Sigmoid colon (tissue), 7 donors: ENCODE measurements at regions of chr7 and their contacts with region 1.

Region 1: DNA sequence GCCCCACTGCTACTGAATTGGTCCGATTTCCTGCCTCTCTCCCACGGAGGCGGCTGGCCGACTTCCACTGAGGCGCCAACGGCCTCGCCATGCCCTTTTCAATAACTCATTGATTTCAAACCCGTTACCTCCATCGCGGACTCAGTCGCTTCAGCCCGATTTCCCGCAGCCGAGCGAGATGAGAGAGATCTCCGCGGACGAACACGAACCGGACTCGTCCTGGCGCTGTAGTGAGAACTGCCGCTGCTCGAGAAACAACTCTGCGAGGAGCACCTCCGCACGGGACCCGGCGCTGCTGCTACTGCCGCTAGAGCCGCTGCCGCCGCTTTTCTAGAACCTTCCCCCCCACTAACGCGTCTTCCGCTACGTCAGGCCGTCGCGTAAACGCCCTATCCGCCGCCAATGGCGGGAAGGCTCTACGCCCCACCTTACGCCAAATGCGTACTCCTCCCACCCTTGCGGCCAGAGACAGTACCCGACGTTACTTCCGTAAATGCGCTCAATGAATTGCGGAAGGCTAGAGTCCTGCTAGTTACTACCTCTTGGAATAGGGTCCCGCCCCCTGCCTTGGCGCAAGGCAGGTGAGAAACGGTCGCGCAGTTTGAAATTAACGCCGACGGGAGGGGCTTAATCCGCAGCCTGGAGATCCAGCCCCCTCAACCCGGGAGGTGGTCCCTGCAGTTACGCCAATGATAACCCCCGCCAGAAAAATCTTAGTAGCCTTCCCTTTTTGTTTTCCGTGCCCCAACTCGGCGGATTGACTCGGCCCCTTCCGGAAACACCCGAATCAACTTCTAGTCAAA is at the start of gene HNRNPA2B1:
- DNase-seq: peak; percentile 99
- H3K4me3 ChIP-seq: peak within 1 kb of the TSS; percentile 83 to 98 (median 94)
- H3K27ac ChIP-seq: peak within 1 kb of the TSS; percentile 97 to 99 (median 98)
- H3K4me1 ChIP-seq: peaks cover 0 to 55% (median 49%) of the 10 kb centered on the region in 4 donors
- H3K27me3 ChIP-seq: no peaks in the 10 kb centered on the region
- CTCF ChIP-seq: peak in 2 of 4 experiments; percentile 4 to 16
- EP300 ChIP-seq: no peak
- POLR2A ChIP-seq: peak; percentile 100
- total RNA-seq, gene HNRNPA2B1: 141 to 208 (median 181) TPM

Region 2: GRCh38 chr7:26078437-26079336 is 122.0 kb before region 1 on chr7:
- intact Hi-C with region 1: loop called (anchors 5 kb)
- DNase-seq: peak; percentile 76
- H3K4me3 ChIP-seq: peak overlapping the region in 1 of 4 donors; percentile 0
- H3K27ac ChIP-seq: no peak overlapping the region
- H3K4me1 ChIP-seq: peaks cover 0 to 17% (median 13%) of the 10 kb centered on the region in 4 donors
- H3K27me3 ChIP-seq: peaks cover 0 to 71% (median 23%) of the 10 kb centered on the region in 3 donors
- CTCF ChIP-seq: peak in 1 of 4 experiments; percentile 13
- EP300 ChIP-seq: peak in 1 of 4 donors; percentile 11
- POLR2A ChIP-seq: no peak

Region 3: GRCh38 chr7:26365077-26365900 is 164.6 kb after region 1 on chr7:
- intact Hi-C with region 1: loop called (anchors 2 kb)
- DNase-seq: no peak
- H3K4me3 ChIP-seq: no peak overlapping the region
- H3K27ac ChIP-seq: no peak overlapping the region
- H3K4me1 ChIP-seq: peaks cover 0 to 8% (median 0%) of the 10 kb centered on the region in 4 donors
- H3K27me3 ChIP-seq: peaks cover 5 to 47% (median 14%) of the 10 kb centered on the region in 3 donors
- CTCF ChIP-seq: peak; percentile 62 to 79 (median 69)
- EP300 ChIP-seq: no peak
- POLR2A ChIP-seq: no peak

Region 4: GRCh38 chr7:26864309-26865093 is 663.9 kb after region 1 on chr7 and contains the start of gene SKAP2:
- intact Hi-C with region 1: loop called (anchors 2 kb)
- DNase-seq: peak; percentile 100
- H3K4me3 ChIP-seq: peak within 1 kb of the TSS; percentile 72 to 91 (median 82)
- H3K27ac ChIP-seq: peak within 1 kb of the TSS; percentile 89 to 98 (median 94)
- H3K4me1 ChIP-seq: no peaks in the 10 kb centered on the region
- H3K27me3 ChIP-seq: no peaks in the 10 kb centered on the region
- CTCF ChIP-seq: no peak
- EP300 ChIP-seq: peak in 1 of 4 donors; percentile 67
- POLR2A ChIP-seq: peak; percentile 91 to 92
- total RNA-seq, gene SKAP2: 13.0 to 19.3 (median 16.8) TPM

Region 5: GRCh38 chr7:27160546-27161213 is 960.0 kb after region 1 on chr7:
- intact Hi-C with region 1: loop called (anchors 2 kb)
- DNase-seq: peak; percentile 94
- H3K4me3 ChIP-seq: peak overlapping the region; percentile 38 to 85 (median 82)
- H3K27ac ChIP-seq: peak overlapping the region in 3 of 4 donors; percentile 97 to 98 (median 98)
- H3K4me1 ChIP-seq: peaks cover 0 to 44% (median 40%) of the 10 kb centered on the region in 4 donors
- H3K27me3 ChIP-seq: no peaks in the 10 kb centered on the region
- CTCF ChIP-seq: peak; percentile 98 to 100 (median 99)
- EP300 ChIP-seq: no peak
- POLR2A ChIP-seq: no peak